ENCODE measurements at regions of chr17 and their contacts with region 1.

Region 1: DNA sequence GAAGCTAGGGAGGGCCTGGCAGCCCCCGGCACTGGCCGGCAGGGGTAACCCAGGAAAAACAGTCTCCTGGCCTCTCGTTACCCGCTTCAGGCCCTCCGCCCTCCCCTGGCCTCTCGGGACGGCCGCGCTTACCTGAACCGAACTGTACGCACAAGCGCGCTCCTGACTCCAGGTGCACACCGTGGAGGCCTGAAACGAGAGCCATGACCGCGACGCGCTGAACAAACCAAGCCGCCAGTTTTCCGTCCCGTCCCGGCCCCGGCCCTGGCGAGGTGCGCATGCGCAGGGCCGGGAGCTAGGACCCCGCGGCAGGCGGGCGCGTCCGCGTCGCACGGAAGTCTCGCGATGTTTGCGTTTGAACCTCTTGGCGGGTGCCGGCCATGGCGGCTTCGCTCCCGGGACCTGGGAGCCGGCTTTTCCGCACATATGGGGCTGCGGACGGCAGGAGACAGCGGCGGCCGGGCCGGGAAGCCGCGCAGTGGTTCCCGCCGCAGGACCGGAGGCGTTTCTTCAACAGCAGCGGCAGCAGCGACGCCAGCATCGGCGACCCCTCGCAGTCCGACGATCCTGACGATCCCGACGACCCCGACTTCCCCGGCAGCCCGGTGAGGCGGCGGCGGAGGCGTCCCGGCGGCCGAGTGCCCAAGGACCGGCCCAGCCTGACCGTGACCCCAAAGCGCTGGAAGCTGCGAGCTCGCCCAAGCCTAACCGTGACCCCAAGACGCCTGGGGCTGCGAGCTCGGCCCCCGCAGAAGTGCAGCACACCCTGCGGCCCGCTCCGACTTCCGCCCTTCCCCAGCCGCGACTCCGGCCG is at the start of gene HASPIN:
- DNase-seq: peak; percentile 98
- ATAC-seq: peak; percentile 89
- H3K4me3 Mint-ChIP-seq: peak within 1 kb of the TSS; percentile 86
- H3K27ac Mint-ChIP-seq: peak within 1 kb of the TSS; percentile 76
- H3K4me1 Mint-ChIP-seq: peaks cover 49% of the 10 kb centered on the region
- H3K27me3 Mint-ChIP-seq: no peaks in the 10 kb centered on the region
- total RNA-seq, gene HASPIN: 17.5 to 21.4 TPM

Region 2: DNA sequence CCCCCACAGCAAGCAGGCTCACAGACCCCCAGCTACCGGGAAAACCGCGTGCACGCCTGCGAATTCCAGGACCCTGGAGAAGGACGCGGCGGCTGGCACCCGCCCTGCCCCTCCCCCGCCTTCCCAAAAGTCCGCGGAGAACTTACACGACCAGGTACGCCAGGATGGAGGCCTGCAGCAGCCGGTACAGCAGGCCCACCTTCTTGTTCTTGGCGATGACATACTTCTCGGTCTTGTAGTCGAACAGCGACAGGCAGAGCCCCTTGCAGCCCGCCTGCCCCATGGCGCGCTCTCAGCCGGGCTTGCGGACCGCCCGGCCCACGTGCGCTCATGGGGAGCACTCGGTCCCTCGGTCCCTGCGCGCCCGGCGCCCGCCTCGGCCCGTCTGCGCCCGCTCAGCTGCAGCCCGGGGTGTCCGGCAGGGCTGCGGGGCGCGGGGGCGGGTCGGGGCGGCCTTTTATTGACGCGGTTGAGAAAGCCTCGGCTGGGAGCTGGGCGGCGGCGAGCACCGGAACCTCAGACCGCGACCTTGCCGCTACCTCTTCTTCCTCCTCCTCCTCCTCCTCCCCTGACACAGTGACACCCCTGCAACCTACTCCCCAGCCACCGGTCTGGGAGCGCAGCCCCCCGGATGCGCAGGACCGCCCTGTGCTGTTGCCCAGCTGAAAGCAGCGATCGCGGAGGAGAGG is 27.9 kb before region 1 on chr17 and contains the start of gene P2RX5:
- POLR2A ChIA-PET with region 1: interaction called, 12 read pairs
- DNase-seq: peak; percentile 74
- ATAC-seq: peak; percentile 75
- H3K4me3 Mint-ChIP-seq: peak within 1 kb of the TSS; percentile 98
- H3K27ac Mint-ChIP-seq: peak within 1 kb of the TSS; percentile 92
- H3K4me1 Mint-ChIP-seq: peaks cover 13% of the 10 kb centered on the region
- H3K27me3 Mint-ChIP-seq: no peaks in the 10 kb centered on the region
- total RNA-seq, gene P2RX5: 17.2 to 19.0 TPM

Region 3: DNA sequence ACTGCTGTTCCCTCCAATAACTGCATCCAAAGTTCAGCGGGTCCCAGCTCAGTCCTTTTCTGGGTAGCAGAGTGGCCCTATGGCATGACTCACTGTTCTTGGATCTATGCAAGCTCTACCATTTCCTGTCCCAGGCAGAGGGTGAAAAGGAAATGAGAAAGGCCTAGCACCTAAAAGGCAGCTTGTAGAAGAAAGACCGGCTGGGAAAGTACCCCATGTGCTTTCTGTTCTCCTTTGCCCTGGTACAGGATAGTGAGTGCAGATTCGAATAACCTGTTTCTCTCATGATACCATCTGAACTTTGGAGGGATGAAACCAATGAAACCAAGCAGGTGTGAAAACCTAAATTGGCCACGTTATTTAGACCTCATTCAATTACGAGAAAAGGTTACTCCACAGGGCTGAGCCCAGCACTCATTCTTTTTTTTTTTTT is 12.8 kb before region 1 on chr17:
- POLR2A ChIA-PET with region 1: interaction called, 19 read pairs
- DNase-seq: peak; percentile 45
- ATAC-seq: peak; percentile 99
- H3K4me3 Mint-ChIP-seq: peak overlapping the region; percentile 68
- H3K27ac Mint-ChIP-seq: peak overlapping the region; percentile 90
- H3K4me1 Mint-ChIP-seq: peaks cover 40% of the 10 kb centered on the region
- H3K27me3 Mint-ChIP-seq: no peaks in the 10 kb centered on the region

Region 4: GRCh38 chr17:3735515-3735914 is 11.8 kb after region 1 on chr17:
- POLR2A ChIA-PET with region 1: no interaction called
- DNase-seq: no peak
- ATAC-seq: no peak
- H3K4me3 Mint-ChIP-seq: no peak overlapping the region
- H3K27ac Mint-ChIP-seq: no peak overlapping the region
- H3K4me1 Mint-ChIP-seq: peaks cover 30% of the 10 kb centered on the region
- H3K27me3 Mint-ChIP-seq: peaks cover 2% of the 10 kb centered on the region

Region 5: GRCh38 chr17:3802461-3803307 is 78.9 kb after region 1 on chr17:
- POLR2A ChIA-PET with region 1: no interaction called
- DNase-seq: no peak
- ATAC-seq: no peak
- H3K4me3 Mint-ChIP-seq: no peak overlapping the region
- H3K27ac Mint-ChIP-seq: no peak overlapping the region
- H3K4me1 Mint-ChIP-seq: peaks cover 25% of the 10 kb centered on the region
- H3K27me3 Mint-ChIP-seq: peaks cover 2% of the 10 kb centered on the region

Region 6: GRCh38 chr17:3865176-3865575 is 141.4 kb after region 1 on chr17:
- POLR2A ChIA-PET with region 1: no interaction called
- DNase-seq: no peak
- ATAC-seq: no peak
- H3K4me3 Mint-ChIP-seq: no peak overlapping the region
- H3K27ac Mint-ChIP-seq: no peak overlapping the region
- H3K4me1 Mint-ChIP-seq: no peaks in the 10 kb centered on the region
- H3K27me3 Mint-ChIP-seq: no peaks in the 10 kb centered on the region

Measured in activated naive CD8-positive, alpha-beta T cell treated with anti-CD3 and anti-CD28 coated beads, Interleukin-2, amount 10 ng/mL, durations not matched to agents 7 days and 5 days (primary cell).